CD4-positive, alpha-beta memory T cell (primary cell): ENCODE measurements at regions of chr3 and their contacts with region 1.

Region 1: DNA sequence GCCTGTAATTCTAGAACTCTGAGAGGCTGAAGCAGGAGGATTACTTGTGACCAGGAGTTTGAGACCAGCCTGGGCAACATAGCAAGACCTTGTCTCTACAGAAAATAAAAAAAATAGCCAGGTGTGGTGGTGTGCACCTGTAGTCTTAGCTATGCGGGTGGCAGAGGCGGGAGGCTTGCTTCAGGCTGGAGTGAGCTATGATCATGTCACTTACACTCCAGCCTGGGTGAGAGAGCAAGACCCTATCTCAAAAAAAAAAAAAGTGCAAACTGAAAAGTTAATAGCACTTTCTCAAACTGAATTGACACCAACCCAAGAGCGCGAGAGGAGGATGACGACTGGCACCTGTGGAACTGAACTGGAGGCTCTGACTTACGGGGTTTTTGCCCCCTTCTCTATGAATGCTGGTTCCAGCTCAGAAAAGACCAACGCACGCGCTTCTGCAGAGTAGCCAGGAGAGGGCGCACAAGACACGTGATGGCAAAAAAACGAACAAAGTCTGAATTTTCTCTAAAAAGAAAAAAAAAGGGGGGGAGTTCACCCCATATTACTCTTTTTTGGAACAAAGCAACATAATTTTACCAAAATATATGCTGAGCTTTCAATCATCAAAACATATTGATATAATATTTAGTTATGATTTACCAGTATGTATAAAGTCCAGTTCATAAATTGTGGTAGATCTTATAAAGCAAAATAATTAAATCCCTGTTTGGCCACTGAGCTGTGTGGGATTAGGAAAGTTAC is 23.7 kb downstream of the CFAP92 start:
- DNase-seq: peak; percentile 58 to 70 (median 62)
- H3K4me3 ChIP-seq: no peak overlapping the region
- H3K4me3 Mint-ChIP-seq: no peak overlapping the region
- H3K27ac ChIP-seq: no peak overlapping the region
- H3K27ac Mint-ChIP-seq: peak overlapping the region in 1 of 7 donors; percentile 19
- H3K4me1 ChIP-seq: no peaks in the 10 kb centered on the region
- H3K4me1 Mint-ChIP-seq: peaks cover 2 to 6% (median 3%) of the 10 kb centered on the region in 4 donors
- H3K27me3 ChIP-seq: no peaks in the 10 kb centered on the region
- H3K27me3 Mint-ChIP-seq: peaks cover 0 to 2% of the 10 kb centered on the region in 2 donors

Region 2: GRCh38 chr3:128879125-128879969 is 90.8 kb before region 1 on chr3 and contains the start of gene ACAD9:
- CTCF ChIA-PET with region 1: interaction called, 20 read pairs
- POLR2A ChIA-PET with region 1: no interaction called
- intact Hi-C with region 1: no loop called
- DNase-seq: peak; percentile 97
- H3K4me3 ChIP-seq: peak within 1 kb of the TSS; percentile 82 to 91
- H3K4me3 Mint-ChIP-seq: peak within 1 kb of the TSS; percentile 85 to 97 (median 94)
- H3K27ac ChIP-seq: peak within 1 kb of the TSS; percentile 92
- H3K27ac Mint-ChIP-seq: peak within 1 kb of the TSS; percentile 92 to 99 (median 99)
- H3K4me1 ChIP-seq: peaks cover 38% of the 10 kb centered on the region
- H3K4me1 Mint-ChIP-seq: peaks cover 47 to 79% (median 61%) of the 10 kb centered on the region in 4 donors
- H3K27me3 ChIP-seq: no peaks in the 10 kb centered on the region
- H3K27me3 Mint-ChIP-seq: no peaks in the 10 kb centered on the region
- total RNA-seq, gene ACAD9: 54.9 to 62.2 TPM

Region 3: DNA sequence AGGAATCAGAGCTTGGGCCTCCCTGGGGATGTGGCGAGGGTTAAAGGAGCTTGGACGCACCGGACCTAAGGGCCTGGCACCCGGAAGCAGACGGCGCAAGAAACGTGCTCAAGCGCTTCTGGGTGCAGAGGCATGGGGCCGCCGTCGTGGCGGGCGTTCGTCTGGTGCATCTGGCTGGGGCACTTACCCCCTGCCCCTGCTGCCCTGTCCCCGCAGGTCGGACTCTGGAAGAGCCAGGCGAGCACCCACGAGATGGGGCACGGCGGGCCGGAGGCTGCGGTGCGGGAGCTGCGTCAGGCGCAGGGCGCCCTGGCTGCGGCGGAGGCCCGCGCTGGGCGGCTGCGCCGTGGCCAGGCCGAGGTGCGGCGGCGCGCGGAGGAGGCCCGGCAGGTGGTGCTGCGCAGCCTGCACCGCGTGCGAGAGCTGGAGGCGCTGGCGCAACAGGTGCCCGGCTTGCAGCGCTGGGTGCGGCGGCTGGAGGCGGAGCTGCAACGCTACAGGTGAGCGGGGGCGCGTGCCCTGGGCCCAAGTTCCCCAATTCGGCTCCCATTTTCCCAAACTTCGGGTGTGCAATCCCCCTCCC is 33.5 kb after region 1 on chr3:
- CTCF ChIA-PET with region 1: interaction called, 24 read pairs
- POLR2A ChIA-PET with region 1: no interaction called
- intact Hi-C with region 1: no loop called
- DNase-seq: peak; percentile 50 to 64 (median 57)
- H3K4me3 ChIP-seq: no peak overlapping the region
- H3K4me3 Mint-ChIP-seq: peak overlapping the region in 4 of 8 donors; percentile 59 to 73 (median 64)
- H3K27ac ChIP-seq: no peak overlapping the region
- H3K27ac Mint-ChIP-seq: peak overlapping the region in 1 of 7 donors; percentile 47
- H3K4me1 ChIP-seq: peaks cover 36% of the 10 kb centered on the region
- H3K4me1 Mint-ChIP-seq: peaks cover 20 to 47% (median 32%) of the 10 kb centered on the region in 4 donors
- H3K27me3 ChIP-seq: peaks cover 25% of the 10 kb centered on the region
- H3K27me3 Mint-ChIP-seq: peaks cover 22 to 27% of the 10 kb centered on the region in 2 donors

Region 4: GRCh38 chr3:129068291-129068886 is 98.2 kb after region 1 on chr3:
- CTCF ChIA-PET with region 1: interaction called, 16 read pairs
- POLR2A ChIA-PET with region 1: no interaction called
- intact Hi-C with region 1: no loop called
- DNase-seq: no peak
- H3K4me3 ChIP-seq: no peak overlapping the region
- H3K4me3 Mint-ChIP-seq: peak overlapping the region; percentile 40 to 79 (median 68)
- H3K27ac ChIP-seq: no peak overlapping the region
- H3K27ac Mint-ChIP-seq: no peak overlapping the region
- H3K4me1 ChIP-seq: no peaks in the 10 kb centered on the region
- H3K4me1 Mint-ChIP-seq: peaks cover 0 to 5% (median 3%) of the 10 kb centered on the region in 4 donors
- H3K27me3 ChIP-seq: no peaks in the 10 kb centered on the region
- H3K27me3 Mint-ChIP-seq: peaks cover 3 to 10% of the 10 kb centered on the region in 2 donors

Region 5: DNA sequence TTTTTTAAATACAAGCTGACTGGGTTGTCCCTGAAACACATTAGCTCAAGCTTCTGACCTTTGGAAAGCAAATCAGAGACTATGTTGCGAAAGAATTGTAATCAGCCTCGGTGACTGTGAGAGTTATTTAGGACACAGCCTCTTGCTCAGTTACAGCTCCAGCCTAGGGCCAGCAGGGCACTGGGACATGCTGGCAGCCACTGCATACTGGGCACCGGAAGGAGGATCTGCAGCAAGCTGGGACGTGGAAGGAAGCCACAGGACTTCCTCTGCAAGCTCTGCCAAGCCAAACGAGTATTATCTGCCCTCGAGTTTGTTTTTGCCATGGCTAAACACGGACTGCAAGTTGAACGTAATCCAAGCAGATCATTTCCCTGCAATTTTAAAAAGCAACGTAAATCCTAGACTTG is 254.8 kb after region 1 on chr3:
- CTCF ChIA-PET with region 1: interaction called, 16 read pairs
- POLR2A ChIA-PET with region 1: no interaction called
- intact Hi-C with region 1: no loop called
- DNase-seq: no peak
- H3K4me3 ChIP-seq: no peak overlapping the region
- H3K4me3 Mint-ChIP-seq: peak overlapping the region in 7 of 8 donors; percentile 2 to 64 (median 46)
- H3K27ac ChIP-seq: no peak overlapping the region
- H3K27ac Mint-ChIP-seq: peak overlapping the region; percentile 24 to 86 (median 67)
- H3K4me1 ChIP-seq: peaks cover 11% of the 10 kb centered on the region
- H3K4me1 Mint-ChIP-seq: peaks cover 6 to 31% (median 17%) of the 10 kb centered on the region in 4 donors
- H3K27me3 ChIP-seq: no peaks in the 10 kb centered on the region
- H3K27me3 Mint-ChIP-seq: no peaks in the 10 kb centered on the region

Region 6: DNA sequence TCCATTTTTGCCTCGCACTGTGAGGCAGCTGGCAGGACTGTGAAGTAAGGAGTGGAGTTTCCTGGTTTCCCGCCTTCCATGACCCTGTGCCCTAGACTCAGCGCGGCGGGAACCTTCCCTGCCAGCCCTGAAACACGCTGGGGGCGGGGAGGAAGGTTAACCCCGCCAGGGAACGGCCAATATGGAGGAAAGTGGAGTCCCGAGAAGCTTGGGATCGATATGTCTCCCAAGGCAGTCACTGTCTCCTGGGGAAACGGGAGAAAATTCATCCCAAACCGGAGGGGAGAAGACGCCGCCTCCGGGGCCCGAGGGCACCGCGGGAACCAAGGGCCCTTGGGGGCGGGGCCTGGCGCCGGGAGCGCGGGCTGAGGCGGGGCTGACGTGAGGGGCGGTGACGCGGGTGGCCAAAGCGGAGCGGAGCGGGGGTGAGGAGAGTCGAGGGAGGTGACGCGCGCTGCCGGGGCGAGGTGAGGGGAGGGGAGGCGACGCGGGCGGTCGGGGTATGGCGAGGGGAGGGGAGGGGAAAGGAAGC is 308.3 kb after region 1 on chr3 and contains the start of gene HMCES:
- CTCF ChIA-PET with region 1: interaction called, 4 read pairs
- POLR2A ChIA-PET with region 1: no interaction called
- intact Hi-C with region 1: loop called (anchors 1 kb)
- DNase-seq: peak; percentile 93 to 97 (median 95)
- H3K4me3 ChIP-seq: peak within 1 kb of the TSS; percentile 69 to 85
- H3K4me3 Mint-ChIP-seq: peak within 1 kb of the TSS; percentile 94 to 99 (median 98)
- H3K27ac ChIP-seq: peak within 1 kb of the TSS; percentile 99
- H3K27ac Mint-ChIP-seq: peak within 1 kb of the TSS; percentile 90 to 100 (median 99)
- H3K4me1 ChIP-seq: peaks cover 44% of the 10 kb centered on the region
- H3K4me1 Mint-ChIP-seq: peaks cover 22 to 50% (median 38%) of the 10 kb centered on the region in 4 donors
- H3K27me3 ChIP-seq: no peaks in the 10 kb centered on the region
- H3K27me3 Mint-ChIP-seq: no peaks in the 10 kb centered on the region
- total RNA-seq, gene HMCES: 50.1 to 52.5 TPM